HepG2 (cell line): ENCODE measurements at regions of chr3 and their contacts with region 1.

Region 1: GRCh38 chr3:182980204-182981037 is at the start of gene DCUN1D1:
- DNase-seq: peak; percentile 71
- ATAC-seq: peak; percentile 89
- H3K4me3 ChIP-seq: peak within 1 kb of the TSS; percentile 72 to 89 (median 85)
- H3K27ac ChIP-seq: peak within 1 kb of the TSS; percentile 61
- H3K4me1 ChIP-seq: peaks cover 40% of the 10 kb centered on the region
- H3K27me3 ChIP-seq: no peaks in the 10 kb centered on the region
- CTCF ChIP-seq: no peak
- EP300 ChIP-seq: no peak
- POLR2A ChIP-seq: peak; percentile 24 to 75; a peak in 3 of 4 replicates
- RAD21 ChIP-seq: peak; percentile 19
- total RNA-seq, gene DCUN1D1: 39.7 and 66.9 TPM in 2 replicates

Region 2: DNA sequence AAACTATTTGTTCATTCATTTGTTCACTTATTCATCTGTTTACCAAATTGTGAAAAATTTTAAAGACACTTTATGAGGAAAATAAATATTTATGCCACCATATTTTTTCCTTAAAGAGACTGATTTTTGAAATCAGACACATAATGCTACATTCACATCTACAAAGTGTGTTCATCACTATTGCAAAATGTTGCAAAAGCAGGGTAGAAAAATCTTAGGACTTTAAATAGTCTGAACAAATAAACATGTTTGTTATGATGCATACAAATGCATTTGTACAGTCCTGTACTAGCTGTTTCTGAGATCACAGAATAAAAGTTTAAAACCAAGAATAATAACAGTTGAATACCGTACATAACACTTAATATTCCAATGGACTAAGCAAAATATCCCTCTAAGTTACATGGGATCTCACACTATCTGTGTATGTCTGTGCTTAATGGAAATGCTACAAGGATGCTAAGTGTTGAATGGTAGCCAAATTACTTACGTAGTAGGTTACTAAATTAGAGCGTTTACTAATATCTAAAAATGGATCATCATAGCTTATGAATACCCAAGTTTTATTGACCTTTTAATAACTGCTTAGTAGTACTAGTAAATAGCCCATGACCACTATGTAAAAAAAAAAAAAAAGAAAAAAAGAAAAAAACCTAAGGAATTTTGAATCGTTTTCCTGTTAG is 162.0 kb before region 1 on chr3:
- CTCF ChIA-PET with region 1: no interaction called
- POLR2A ChIA-PET with region 1: no interaction called
- in situ Hi-C with region 1: no loop called
- intact Hi-C with region 1: no loop called
- DNase-seq: no peak
- ATAC-seq: no peak
- H3K4me3 ChIP-seq: no peak overlapping the region
- H3K27ac ChIP-seq: no peak overlapping the region
- H3K4me1 ChIP-seq: 0 out of 2 replicates have a peak, but pooled peaks cover 7% of the 10 kb centered on the region
- H3K27me3 ChIP-seq: no peaks in the 10 kb centered on the region
- CTCF ChIP-seq: no peak
- EP300 ChIP-seq: no peak
- POLR2A ChIP-seq: no peak
- RAD21 ChIP-seq: no peak

Region 3: GRCh38 chr3:182969277-182969676 is 11.1 kb before region 1 on chr3:
- CTCF ChIA-PET with region 1: no interaction called
- POLR2A ChIA-PET with region 1: interaction called, 10 read pairs
- in situ Hi-C with region 1: no loop called
- intact Hi-C with region 1: no loop called
- DNase-seq: no peak
- ATAC-seq: no peak
- H3K4me3 ChIP-seq: no peak overlapping the region
- H3K27ac ChIP-seq: no peak overlapping the region
- H3K4me1 ChIP-seq: peaks cover 41% of the 10 kb centered on the region
- H3K27me3 ChIP-seq: 0 out of 5 replicates have a peak, but pooled peaks cover 0 to 1% of the 10 kb centered on the region in 2 experiments
- CTCF ChIP-seq: no peak
- EP300 ChIP-seq: no peak
- POLR2A ChIP-seq: no peak
- RAD21 ChIP-seq: no peak